PC-9 (cell line): ENCODE measurements at regions of chr19 and their contacts with region 1.

Region 1: DNA sequence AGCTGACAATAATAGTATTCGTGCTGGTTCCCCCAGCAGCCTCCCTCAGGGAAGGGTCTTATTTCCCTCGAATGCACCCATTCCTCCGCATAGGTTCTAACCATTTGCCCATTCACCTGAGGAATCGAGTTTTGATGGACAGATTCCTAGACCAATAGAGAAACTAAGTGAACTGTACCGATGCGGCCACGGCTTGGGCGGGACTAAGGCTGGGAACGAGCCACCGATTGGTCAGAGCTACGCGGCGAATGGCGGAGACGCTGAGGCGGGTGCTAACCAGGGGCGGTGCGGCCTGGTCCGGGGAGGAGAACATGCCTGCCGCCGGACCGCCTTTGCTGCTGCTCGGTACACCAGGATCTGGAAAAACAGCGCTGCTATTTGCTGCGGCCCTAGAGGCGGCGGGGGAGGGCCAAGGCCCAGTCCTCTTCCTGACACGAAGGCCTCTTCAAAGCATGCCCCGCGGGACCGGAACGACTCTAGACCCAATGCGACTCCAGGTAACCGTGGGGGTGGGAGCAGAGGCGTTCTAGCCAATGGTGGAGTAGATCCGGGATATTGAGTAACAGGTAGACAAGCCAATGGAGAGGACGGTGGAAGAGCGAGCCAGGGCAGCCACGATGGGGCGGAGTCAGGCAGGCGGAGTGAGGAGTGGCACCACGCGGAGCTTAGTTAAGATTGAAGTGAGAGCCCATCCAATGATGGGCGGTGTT is at the start of gene SWSAP1:
- DNase-seq: peak; percentile 97 to 99
- H3K4me3 ChIP-seq: peak within 1 kb of the TSS; percentile 62
- H3K27ac ChIP-seq: peak within 1 kb of the TSS; percentile 75
- H3K4me1 ChIP-seq: peaks cover 44% of the 10 kb centered on the region
- H3K27me3 ChIP-seq: no peaks in the 10 kb centered on the region
- CTCF ChIP-seq: no peak
- total RNA-seq, gene SWSAP1: 4.6 and 4.8 TPM in 2 replicates

Region 2: DNA sequence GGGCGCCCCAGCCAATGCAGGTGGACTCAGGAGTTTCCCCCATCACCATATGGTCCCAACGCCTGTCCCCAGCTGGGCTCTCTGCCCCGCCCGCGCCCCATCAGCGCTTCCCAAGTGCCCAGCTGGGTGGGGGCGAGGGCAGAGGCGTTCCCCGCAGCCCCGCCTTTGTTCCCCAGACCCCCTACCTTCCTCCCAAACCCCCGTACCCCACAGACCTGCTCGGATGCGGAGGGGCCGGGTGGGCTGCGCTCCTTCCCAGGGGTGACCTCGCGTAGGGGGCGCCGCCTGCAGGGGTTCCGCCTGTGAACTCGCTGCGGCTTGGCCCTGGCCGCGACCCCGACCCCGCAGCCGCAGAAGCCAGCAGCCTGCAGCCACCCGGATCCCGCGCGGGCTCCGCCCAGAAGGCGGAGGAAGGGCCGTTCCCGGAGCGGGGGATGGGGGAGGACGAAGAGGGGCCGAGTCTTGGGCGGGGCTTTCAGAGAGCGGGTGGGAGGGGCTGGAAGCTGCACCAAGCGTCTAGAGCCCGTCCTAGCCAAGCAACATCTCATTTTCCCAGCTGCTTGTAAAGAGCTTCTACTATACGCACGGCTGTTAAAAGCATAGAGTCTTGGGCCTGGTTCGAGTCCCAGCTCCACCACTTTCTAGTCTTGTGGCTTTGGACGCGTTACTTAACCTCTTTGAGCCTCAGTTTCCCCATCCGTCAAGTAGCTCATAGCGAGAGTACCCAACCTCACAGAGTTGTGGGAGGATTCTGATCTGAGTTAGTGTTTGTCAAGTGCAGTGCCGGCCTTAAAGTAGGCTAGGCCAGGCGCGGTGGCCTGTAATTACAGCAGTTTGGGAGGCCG is 35.1 kb before region 1 on chr19 and contains the start of gene RAB3D:
- CTCF ChIA-PET with region 1: no interaction called
- POLR2A ChIA-PET with region 1: interaction called, 33 read pairs
- intact Hi-C with region 1: no loop called
- DNase-seq: peak; percentile 78 to 88
- H3K4me3 ChIP-seq: peak within 1 kb of the TSS; percentile 84
- H3K27ac ChIP-seq: no peak within 1 kb of the TSS
- H3K4me1 ChIP-seq: peaks cover 27% of the 10 kb centered on the region
- H3K27me3 ChIP-seq: no peaks in the 10 kb centered on the region
- CTCF ChIP-seq: no peak
- total RNA-seq, gene RAB3D: 35.0 and 36.5 TPM in 2 replicates

Region 3: DNA sequence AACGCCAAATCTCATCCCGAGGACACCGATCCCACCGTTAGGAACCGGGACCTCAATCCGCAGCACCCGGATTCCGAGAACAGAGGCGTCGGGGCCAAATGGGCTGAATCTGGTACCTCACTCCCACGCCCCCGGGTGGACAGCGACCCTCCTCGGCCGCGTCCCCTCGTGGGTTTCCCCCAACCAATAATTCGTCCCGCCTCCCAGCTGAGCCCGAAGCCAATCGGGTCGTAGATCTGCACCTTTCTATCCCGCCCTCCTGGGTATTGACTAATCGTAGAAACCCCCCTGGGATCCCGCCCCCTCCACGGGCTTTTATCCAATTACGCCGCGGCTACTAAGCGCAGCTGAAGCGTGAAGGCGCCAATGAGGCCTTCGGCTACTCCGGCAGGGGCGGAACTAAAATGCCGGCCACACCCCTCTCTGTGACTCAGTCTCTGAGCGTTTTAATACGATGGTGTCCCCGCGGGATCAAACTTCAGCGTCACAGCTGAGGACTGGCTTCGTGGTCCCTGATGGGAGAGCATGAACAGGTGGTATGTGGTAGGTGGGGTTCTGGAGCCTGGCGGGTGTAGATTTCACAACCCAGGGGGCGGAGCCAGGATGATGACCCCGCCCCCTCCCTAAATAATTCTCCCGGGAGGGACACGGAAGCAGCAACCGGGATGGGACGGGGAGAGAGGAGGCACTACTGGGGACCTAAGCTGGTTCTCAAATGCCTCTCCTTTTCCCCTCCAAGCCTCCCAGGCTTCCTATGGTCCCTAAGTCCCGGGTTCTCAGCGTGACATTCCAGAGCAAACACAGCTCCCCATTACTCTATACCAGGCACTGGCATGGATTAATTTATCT is 28.3 kb before region 1 on chr19 and contains the starts of genes CCDC159 and TMEM205:
- CTCF ChIA-PET with region 1: interaction called, 6 read pairs
- POLR2A ChIA-PET with region 1: interaction called, 13 read pairs
- intact Hi-C with region 1: loop called (anchors 1 kb)
- DNase-seq: peak; percentile 98 to 99
- H3K4me3 ChIP-seq: peak within 1 kb of the TSS; percentile 90
- H3K27ac ChIP-seq: peak within 1 kb of the TSS; percentile 67
- H3K4me1 ChIP-seq: peaks cover 36% of the 10 kb centered on the region
- H3K27me3 ChIP-seq: no peaks in the 10 kb centered on the region
- CTCF ChIP-seq: no peak
- total RNA-seq, gene CCDC159: 9.4 and 13.7 TPM in 2 replicates
- total RNA-seq, gene TMEM205: 80.3 and 90.6 TPM in 2 replicates

Region 4: DNA sequence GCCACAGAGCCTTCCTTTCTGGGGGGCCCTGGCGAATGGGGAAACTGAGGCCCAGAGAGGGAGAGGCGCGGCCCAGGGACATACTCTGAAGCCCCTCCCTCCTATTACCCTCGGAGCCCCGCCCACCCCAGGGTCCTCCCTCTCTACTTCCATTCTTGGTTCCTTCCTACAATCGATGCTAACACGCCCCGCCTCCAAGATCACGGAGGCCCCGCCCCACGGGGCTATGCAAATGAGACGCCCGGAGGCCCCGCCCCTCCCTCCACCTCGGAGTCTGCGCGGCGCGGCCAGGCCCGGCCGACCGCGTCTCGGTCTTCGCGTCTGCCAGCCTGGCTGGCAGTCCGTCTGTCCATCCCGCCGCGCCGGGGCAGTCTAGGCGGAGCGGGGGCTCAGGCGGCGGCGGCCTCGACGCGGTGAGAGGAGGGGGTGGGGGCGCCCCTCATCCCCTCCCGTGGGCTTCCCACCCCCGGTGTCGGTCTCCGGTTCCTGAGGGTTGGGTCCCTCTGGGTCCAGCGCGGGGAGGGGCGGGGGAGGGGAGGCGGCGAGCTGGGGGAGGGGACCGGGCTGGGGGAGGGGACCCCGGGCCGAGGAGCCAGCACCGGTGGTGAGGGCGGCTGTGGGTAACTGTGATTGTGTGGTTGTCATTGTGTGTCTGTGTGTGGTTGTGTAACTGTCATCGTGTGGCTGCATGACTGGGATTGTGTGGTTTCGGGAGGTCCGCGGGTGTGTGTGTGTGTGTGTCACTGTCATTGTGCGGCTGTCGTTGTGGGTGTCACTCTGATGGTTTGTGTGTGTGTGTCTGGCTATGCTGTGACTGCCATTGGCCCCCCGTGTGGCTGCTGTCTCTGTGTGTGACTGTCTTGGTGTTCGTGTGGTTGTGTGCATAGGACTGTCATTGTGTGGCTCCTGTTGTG is 19.2 kb before region 1 on chr19 and contains the start of gene PLPPR2:
- CTCF ChIA-PET with region 1: no interaction called
- POLR2A ChIA-PET with region 1: interaction called, 3 read pairs
- intact Hi-C with region 1: loop called (anchors 2 kb)
- DNase-seq: peak; percentile 79 to 90
- H3K4me3 ChIP-seq: peak within 1 kb of the TSS; percentile 74
- H3K27ac ChIP-seq: no peak within 1 kb of the TSS
- H3K4me1 ChIP-seq: peaks cover 25% of the 10 kb centered on the region
- H3K27me3 ChIP-seq: no peaks in the 10 kb centered on the region
- CTCF ChIP-seq: no peak
- total RNA-seq, gene PLPPR2: 25.2 and 30.4 TPM in 2 replicates

Region 5: GRCh38 chr19:11435058-11435832 is 60.7 kb after region 1 on chr19 and contains the starts of genes ODAD3 and PRKCSH:
- CTCF ChIA-PET with region 1: no interaction called
- POLR2A ChIA-PET with region 1: interaction called, 9 read pairs
- intact Hi-C with region 1: loop called (anchors 2 kb)
- DNase-seq: peak; percentile 99
- H3K4me3 ChIP-seq: peak within 1 kb of the TSS; percentile 76
- H3K27ac ChIP-seq: peak within 1 kb of the TSS; percentile 67
- H3K4me1 ChIP-seq: peaks cover 14% of the 10 kb centered on the region
- H3K27me3 ChIP-seq: no peaks in the 10 kb centered on the region
- CTCF ChIP-seq: peak; percentile 96
- total RNA-seq, gene ODAD3: 0.15 and 0.39 TPM in 2 replicates
- total RNA-seq, gene PRKCSH: 410 and 412 TPM in 2 replicates